Activated CD4-positive, alpha-beta T cell treated with anti-CD3 and anti-CD28 coated beads for 36 hours (primary cell): ENCODE measurements at regions of chr10 and their contacts with region 1.

Region 1: GRCh38 chr10:6202684-6203330 is at the start of gene PFKFB3:
- DNase-seq: peak; percentile 98
- ATAC-seq: peak; percentile 64
- H3K4me3 Mint-ChIP-seq: peak within 1 kb of the TSS; percentile 89
- H3K27ac Mint-ChIP-seq: peak within 1 kb of the TSS; percentile 95
- H3K4me1 Mint-ChIP-seq: peaks cover 43% of the 10 kb centered on the region
- H3K27me3 Mint-ChIP-seq: no peaks in the 10 kb centered on the region
- total RNA-seq, gene PFKFB3: 133 to 183 TPM

Region 2: GRCh38 chr10:6062101-6062771 is 140.6 kb before region 1 on chr10 and contains the start of gene IL2RA:
- CTCF ChIA-PET with region 1: no interaction called
- POLR2A ChIA-PET with region 1: interaction called, 4 read pairs
- intact Hi-C with region 1: loop called (anchors 1 kb)
- DNase-seq: peak; percentile 87
- ATAC-seq: peak; percentile 79
- H3K4me3 Mint-ChIP-seq: peak within 1 kb of the TSS; percentile 91
- H3K27ac Mint-ChIP-seq: peak within 1 kb of the TSS; percentile 93
- H3K4me1 Mint-ChIP-seq: peaks cover 53% of the 10 kb centered on the region
- H3K27me3 Mint-ChIP-seq: peaks cover 3% of the 10 kb centered on the region
- total RNA-seq, gene IL2RA: 659 to 980 TPM

Region 3: GRCh38 chr10:6136215-6137201 is 66.3 kb before region 1 on chr10:
- CTCF ChIA-PET with region 1: interaction called, 8 read pairs
- POLR2A ChIA-PET with region 1: interaction called, 5 read pairs
- intact Hi-C with region 1: loop called in 1 of 2 experiments (anchors 2 kb)
- DNase-seq: peak; percentile 83
- ATAC-seq: peak; percentile 81
- H3K4me3 Mint-ChIP-seq: peak overlapping the region; percentile 61
- H3K27ac Mint-ChIP-seq: peak overlapping the region; percentile 89
- H3K4me1 Mint-ChIP-seq: peaks cover 71% of the 10 kb centered on the region
- H3K27me3 Mint-ChIP-seq: peaks cover 6% of the 10 kb centered on the region

Region 4: DNA sequence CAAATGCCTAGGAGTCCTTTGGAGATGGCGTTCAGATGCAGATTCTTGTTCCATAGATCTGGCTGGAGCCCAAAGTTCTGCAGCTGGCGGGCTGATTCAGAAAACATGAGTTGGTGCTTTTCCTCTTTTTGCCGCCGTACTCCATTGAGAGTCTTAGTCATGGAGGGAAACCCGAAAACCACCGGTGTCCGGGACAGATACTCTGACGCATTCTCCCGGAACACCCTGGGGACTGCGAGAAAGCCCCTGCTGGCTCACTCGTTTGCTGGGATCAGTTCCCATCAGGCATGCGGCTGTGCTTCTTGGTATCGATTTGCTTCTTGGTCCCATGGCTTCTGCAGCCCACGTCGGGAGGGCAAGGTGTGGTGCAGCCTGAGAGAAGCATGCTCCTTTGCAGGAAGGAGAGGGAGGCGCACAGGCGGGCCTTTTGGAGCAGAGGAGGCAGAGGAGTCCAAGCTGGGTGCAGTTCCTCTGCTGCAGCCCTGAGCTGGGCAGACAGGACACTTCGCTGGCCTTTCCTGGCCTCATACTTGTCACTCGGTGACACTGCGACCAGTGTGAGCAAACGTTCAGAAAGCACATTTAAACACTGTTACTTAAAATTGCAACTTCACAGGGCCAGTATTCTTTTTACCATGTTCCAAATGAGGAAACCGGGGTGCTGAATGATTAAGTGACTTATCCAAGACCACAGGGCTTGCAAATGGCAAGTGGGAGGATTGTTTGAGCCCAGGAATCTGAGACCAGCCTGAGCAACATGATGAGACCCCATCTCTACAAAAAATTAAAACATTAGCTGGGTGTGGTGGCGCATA is 30.7 kb before region 1 on chr10:
- CTCF ChIA-PET with region 1: interaction called, 18 read pairs
- POLR2A ChIA-PET with region 1: interaction called, 3 read pairs
- intact Hi-C with region 1: loop called (anchors 2 kb)
- DNase-seq: peak; percentile 80
- ATAC-seq: peak; percentile 66
- H3K4me3 Mint-ChIP-seq: peak overlapping the region; percentile 29
- H3K27ac Mint-ChIP-seq: peak overlapping the region; percentile 90
- H3K4me1 Mint-ChIP-seq: peaks cover 97% of the 10 kb centered on the region
- H3K27me3 Mint-ChIP-seq: no peaks in the 10 kb centered on the region

Region 5: DNA sequence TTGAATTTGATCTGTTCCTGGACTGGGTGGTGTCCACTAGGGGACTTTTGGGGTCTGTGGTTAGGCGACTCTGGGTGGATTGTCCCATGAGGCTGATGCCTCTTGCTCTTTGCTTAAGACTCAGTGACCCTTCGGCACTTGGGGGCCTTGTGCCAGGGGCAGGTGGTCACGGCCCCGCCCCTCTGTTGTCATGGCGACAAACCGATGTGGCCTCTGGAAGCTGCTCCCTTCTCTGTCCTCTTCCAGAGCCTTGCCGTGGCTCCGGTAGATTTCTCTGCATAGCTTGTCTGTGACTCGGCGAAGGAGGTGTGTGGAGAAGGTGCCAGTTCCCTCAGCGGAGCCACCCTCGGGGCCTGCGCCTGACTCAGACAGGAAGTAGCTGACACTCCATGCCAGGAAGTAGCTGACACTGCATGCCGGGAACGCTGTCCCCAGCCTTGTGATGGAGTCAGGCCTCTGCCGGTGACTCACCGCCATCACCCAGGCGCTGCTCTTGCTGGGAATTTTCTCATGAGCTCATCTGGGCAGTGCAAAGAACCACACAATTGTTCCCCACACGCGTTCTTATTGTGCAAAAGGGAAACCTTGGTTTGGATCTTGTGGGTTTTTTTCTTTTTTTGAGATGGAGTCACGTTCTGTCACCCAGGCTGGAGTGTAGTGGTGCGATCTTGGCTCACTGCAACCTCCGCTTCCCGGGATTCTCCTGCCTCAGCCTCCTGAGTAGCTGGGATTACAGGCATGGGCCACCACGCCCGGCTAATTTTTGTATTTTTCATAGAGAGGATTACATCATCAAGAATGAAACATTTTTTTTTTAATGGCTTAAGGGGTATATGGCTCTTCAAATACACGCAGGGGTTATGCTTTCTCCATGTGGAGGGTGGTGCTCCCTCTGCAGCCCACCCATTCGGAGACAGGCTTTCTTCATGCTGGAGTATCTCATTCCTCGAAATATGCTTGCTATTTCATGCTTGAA is 72.5 kb after region 1 on chr10:
- CTCF ChIA-PET with region 1: interaction called, 5 read pairs
- POLR2A ChIA-PET with region 1: interaction called, 11 read pairs
- intact Hi-C with region 1: loop called (anchors 1 to 2 kb)
- DNase-seq: peak; percentile 97
- ATAC-seq: peak; percentile 91
- H3K4me3 Mint-ChIP-seq: peak overlapping the region; percentile 70
- H3K27ac Mint-ChIP-seq: peak overlapping the region; percentile 97
- H3K4me1 Mint-ChIP-seq: peaks cover 69% of the 10 kb centered on the region
- H3K27me3 Mint-ChIP-seq: no peaks in the 10 kb centered on the region

Region 6: DNA sequence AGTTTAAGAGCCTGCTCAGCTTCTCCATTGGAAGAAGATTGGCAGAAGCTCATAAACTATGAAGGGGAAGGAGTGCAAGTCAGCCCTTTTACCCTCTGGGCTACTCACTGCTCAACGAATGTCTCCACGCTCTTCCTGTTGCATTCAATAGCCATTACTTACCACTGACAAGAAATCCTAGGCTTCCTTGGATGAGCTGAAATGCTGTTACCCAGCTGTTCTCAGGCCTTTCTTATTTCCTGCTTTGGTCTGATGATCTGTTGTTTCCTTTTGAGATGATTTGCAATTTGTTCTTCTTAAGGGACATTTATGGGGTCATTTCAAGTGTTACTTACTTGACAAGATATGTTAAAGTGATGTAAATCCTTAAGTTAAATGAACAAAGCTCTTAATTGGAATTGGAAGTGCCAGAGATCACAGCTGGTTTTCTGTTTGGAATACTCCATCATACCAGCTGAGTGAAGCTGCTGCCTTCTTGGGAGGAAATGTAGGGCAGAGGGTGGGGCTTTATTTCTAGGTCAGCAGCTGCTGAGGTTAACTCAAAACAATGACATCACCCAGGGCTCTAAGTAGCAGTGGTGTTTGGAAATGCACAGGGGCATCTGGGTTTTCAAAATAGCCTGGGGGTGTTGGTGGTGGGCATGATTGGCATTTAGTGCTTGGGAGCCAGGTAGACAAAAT is 207.3 kb after region 1 on chr10:
- CTCF ChIA-PET with region 1: interaction called, 33 read pairs
- POLR2A ChIA-PET with region 1: interaction called, 10 read pairs
- intact Hi-C with region 1: loop called in 1 of 2 experiments (anchors 1 kb)
- DNase-seq: peak; percentile 28
- ATAC-seq: peak; percentile 72
- H3K4me3 Mint-ChIP-seq: peak overlapping the region; percentile 47
- H3K27ac Mint-ChIP-seq: peak overlapping the region; percentile 76
- H3K4me1 Mint-ChIP-seq: peaks cover 43% of the 10 kb centered on the region
- H3K27me3 Mint-ChIP-seq: peaks cover 3% of the 10 kb centered on the region